Right ventricle myocardium inferior (tissue), 1 donor: ENCODE measurements at regions of chr10 and their contacts with region 1.

Region 1: DNA sequence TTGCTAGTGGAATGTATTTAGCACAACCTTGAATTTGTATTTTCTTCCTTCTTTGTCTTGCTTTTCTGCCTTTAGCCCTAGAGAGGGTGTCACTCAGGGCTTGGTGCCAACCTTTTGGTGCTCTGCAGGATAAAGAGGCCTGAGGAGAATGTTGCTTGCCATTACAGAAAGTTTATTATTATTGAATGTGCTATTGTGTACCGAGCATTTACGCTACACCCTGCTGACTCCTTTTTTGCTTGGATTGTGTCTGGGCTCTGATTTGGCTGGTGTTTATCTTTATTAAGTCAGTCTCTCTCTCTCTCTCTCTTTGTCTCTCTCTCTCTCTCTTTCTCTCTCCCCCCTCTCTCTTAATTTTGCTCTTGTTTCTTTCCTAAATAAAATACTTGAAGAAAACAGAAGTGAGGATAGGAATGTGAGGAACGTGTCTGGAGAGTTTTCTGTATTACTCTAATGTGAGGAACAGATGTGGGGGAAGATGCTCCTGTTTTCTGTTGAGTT is 284.4 kb upstream of the PHYHIPL start:
- DNase-seq: no peak
- ATAC-seq: no peak

Region 2: DNA sequence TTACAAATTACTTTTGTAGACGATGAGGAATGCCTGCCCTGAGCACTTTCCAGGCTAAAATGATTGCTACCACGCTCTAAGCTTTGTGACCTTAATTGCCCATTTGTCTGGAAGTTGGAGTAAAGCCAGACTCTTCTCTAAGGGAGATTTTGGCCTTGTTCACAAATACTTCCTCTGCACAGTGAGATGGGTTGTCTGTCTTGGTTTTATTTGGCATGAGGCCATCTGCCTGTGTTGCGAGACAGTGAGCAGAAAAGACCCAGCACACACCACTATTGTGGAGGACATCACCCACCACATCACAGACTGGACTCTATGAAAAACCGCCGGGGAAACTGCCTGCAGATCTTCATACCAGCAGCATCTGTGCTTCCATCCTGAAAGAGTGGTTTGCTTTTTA is 241.0 kb before region 1 on chr10:
- intact Hi-C with region 1: no loop called
- DNase-seq: no peak
- ATAC-seq: peak; percentile 72

Region 3: DNA sequence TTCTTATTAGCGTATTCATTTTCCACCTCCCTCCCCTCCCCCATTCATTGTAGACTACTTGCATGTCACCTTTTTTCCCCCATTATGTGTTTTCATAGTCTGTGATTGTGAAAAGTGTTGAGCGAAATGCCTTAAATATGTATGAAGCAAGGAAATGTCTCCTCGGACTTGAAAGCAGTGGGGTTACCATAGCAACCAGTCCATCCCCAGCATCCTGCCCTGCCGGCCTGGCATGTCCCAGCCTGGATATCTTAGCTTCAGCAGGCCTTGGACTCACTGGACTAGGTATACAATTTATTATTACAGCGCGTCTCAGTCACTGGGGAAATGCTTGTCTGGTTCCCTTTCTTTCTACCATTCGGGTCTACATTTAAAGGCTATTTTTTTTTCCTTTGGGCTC is 95.8 kb before region 1 on chr10:
- intact Hi-C with region 1: loop called (anchors 10 kb)
- DNase-seq: no peak
- ATAC-seq: no peak

Region 4: DNA sequence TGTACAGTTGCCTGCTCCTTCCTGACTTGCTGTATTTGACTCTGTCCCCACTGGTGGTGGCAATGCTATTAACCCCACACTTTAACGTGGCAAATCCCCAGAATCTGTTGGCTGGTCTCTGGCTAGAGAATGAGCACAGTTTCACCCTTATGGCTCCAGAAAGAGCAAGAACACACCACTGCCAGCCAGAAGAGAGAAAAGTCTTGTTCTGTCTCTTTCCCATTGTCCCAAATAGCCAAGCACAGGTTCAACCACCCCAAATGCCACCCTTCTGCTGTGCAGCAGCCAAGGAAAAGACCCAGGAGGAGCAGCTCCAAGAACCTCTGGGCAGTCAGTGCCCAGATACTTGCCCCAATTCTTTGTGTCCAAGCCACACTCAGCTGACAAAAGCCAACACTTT is 806.2 kb after region 1 on chr10:
- intact Hi-C with region 1: no loop called
- DNase-seq: no peak
- ATAC-seq: no peak